Activated CD8-positive, alpha-beta T cell treated with anti-CD3 and anti-CD28 coated beads for 36 hours (primary cell): ENCODE measurements at regions of chr11 and their contacts with region 1.

Region 1: DNA sequence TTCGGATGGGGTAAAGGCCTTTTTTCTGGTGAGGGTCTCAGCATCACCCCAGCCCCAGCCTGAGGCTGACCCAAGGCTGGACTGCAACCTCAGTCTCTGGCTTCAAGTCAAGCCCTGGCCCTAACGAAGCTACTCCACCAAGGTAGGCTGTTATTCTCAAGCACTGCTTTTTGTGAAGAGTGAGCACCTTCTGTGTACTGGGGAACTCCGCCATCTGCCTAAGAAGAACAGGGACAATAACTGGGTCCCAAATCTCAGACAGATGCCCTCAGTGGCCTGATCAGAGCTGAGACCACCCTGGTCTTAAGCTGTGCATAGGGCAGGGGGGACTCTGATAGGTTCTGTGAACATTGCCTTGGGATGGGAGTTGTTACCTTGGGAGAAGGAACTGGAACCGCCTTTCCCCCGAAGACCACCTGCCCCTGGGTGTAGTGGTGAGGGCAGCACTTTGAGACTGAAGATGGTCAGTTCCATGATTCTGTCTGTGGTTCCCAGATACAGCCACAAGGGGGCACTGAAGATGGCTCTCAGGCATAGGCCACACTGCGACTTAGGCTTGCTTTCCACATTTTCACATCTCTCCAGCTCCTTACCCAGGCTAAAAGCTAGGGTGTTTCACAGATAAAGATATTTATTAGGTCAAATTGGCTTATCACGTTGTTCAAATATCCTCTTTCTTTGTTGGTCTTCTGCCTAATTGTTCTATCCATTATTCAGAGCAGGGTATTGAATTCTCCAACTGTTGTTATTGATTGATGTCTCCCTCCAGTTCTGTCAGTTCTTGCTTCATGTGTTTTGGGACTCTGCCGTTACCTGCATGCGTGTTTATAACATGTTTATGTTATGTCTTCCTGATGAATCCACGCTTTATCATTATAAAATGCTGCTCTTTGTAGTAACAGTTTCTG is 11.8 kb upstream of the UVRAG start:
- DNase-seq: peak; percentile 84
- ATAC-seq: peak; percentile 99
- H3K4me3 Mint-ChIP-seq: no peak overlapping the region
- H3K27ac Mint-ChIP-seq: no peak overlapping the region
- H3K4me1 Mint-ChIP-seq: no peaks in the 10 kb centered on the region
- H3K27me3 Mint-ChIP-seq: no peaks in the 10 kb centered on the region
- CTCF ChIP-seq: peak; percentile 84

Region 2: GRCh38 chr11:75814686-75815344 is 11.6 kb after region 1 on chr11 and contains the start of gene UVRAG:
- CTCF ChIA-PET with region 1: interaction called, 39 read pairs
- POLR2A ChIA-PET with region 1: no interaction called
- intact Hi-C with region 1: no loop called
- DNase-seq: peak; percentile 98
- ATAC-seq: peak; percentile 94
- H3K4me3 Mint-ChIP-seq: no peak within 1 kb of the TSS
- H3K27ac Mint-ChIP-seq: peak within 1 kb of the TSS; percentile 94
- H3K4me1 Mint-ChIP-seq: peaks cover 9% of the 10 kb centered on the region
- H3K27me3 Mint-ChIP-seq: no peaks in the 10 kb centered on the region
- CTCF ChIP-seq: no peak
- total RNA-seq, gene UVRAG: 14.4 to 15.7 TPM

Region 3: GRCh38 chr11:75831915-75832502 is 28.8 kb after region 1 on chr11:
- CTCF ChIA-PET with region 1: interaction called, 16 read pairs
- POLR2A ChIA-PET with region 1: no interaction called
- intact Hi-C with region 1: no loop called
- DNase-seq: no peak
- ATAC-seq: no peak
- H3K4me3 Mint-ChIP-seq: no peak overlapping the region
- H3K27ac Mint-ChIP-seq: no peak overlapping the region
- H3K4me1 Mint-ChIP-seq: peaks cover 7% of the 10 kb centered on the region
- H3K27me3 Mint-ChIP-seq: no peaks in the 10 kb centered on the region
- CTCF ChIP-seq: no peak

Region 4: GRCh38 chr11:76025068-76025467 is 221.9 kb after region 1 on chr11:
- CTCF ChIA-PET with region 1: no interaction called
- POLR2A ChIA-PET with region 1: no interaction called
- intact Hi-C with region 1: no loop called
- DNase-seq: no peak
- ATAC-seq: no peak
- H3K4me3 Mint-ChIP-seq: no peak overlapping the region
- H3K27ac Mint-ChIP-seq: no peak overlapping the region
- H3K4me1 Mint-ChIP-seq: peaks cover 5% of the 10 kb centered on the region
- H3K27me3 Mint-ChIP-seq: no peaks in the 10 kb centered on the region
- CTCF ChIP-seq: no peak